OCI-LY7 (cell line): ENCODE measurements at regions of chr4 and their contacts with region 1.

Region 1: DNA sequence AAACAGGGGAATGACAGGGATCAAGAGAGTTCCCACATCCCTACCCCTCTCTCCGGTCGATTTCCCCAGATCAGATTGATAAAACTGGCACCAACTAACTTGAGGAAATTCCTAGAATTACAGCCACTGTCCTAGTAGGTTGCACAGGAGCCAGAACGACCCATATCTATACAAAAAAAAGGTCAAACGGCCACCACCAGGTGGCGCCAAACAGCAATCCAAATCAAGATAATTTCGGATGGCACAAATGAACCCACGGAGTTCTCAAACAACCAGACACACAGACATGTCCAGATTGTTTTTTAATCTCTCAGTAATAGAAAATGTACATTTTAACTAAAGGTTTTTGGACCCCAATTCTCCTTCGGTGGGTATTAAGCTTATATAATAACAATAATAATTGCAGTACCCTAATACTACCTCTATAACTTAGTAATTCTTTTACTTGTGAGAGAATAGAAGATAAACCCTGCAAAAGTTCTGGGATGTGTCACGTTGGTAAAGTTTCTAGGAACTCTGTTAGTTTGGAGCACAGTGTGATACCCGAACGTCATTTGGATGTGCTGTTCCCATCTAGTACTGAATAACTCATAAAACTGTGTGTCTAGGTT is 212.6 kb downstream of the SPOCK3 start:
- DNase-seq: peak; percentile 55
- H3K4me3 ChIP-seq: no peak overlapping the region
- H3K27ac ChIP-seq: no peak overlapping the region
- H3K4me1 ChIP-seq: no peaks in the 10 kb centered on the region
- CTCF ChIP-seq: peak; percentile 92

Region 2: DNA sequence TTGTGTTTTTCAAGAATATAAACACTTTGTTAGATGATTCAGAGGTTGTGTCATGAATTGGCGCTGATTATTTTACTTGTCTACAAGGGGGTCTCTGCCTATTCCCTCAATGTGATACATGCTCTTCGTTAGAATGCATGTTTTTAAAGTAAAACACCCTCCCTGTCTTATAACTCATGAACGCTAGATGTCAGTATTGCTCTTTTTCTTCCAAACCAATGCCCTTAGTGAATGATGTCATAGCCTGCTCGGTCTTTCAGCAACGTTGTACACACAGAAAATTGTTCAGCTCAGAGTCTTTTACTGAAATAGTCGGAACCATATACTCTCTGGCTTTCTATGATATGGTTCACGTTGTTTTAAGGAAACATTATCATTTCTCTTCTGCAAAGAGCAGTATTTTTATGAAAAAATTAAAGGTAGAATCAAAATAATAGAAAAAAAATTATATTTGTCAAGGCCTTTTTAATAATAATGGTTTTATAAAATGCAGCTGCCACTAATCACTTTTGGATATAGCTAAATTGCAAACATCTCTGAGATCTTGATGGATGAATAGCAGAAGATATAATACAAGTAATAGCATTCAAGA is 855.7 kb before region 1 on chr4:
- CTCF ChIA-PET with region 1: no interaction called
- POLR2A ChIA-PET with region 1: no interaction called
- intact Hi-C with region 1: loop called (anchors 10 kb)
- DNase-seq: peak; percentile 68
- H3K4me3 ChIP-seq: no peak overlapping the region
- H3K27ac ChIP-seq: no peak overlapping the region
- H3K4me1 ChIP-seq: no peaks in the 10 kb centered on the region
- CTCF ChIP-seq: peak; percentile 84

Region 3: GRCh38 chr4:167100120-167100519 is 78.5 kb after region 1 on chr4:
- CTCF ChIA-PET with region 1: no interaction called
- POLR2A ChIA-PET with region 1: no interaction called
- intact Hi-C with region 1: no loop called
- DNase-seq: no peak
- H3K4me3 ChIP-seq: no peak overlapping the region
- H3K27ac ChIP-seq: no peak overlapping the region
- H3K4me1 ChIP-seq: no peaks in the 10 kb centered on the region
- CTCF ChIP-seq: no peak

Region 4: GRCh38 chr4:167290678-167291077 is 269.0 kb after region 1 on chr4:
- CTCF ChIA-PET with region 1: no interaction called
- POLR2A ChIA-PET with region 1: no interaction called
- intact Hi-C with region 1: loop called (anchors 5 kb)
- DNase-seq: no peak
- H3K4me3 ChIP-seq: no peak overlapping the region
- H3K27ac ChIP-seq: no peak overlapping the region
- H3K4me1 ChIP-seq: no peaks in the 10 kb centered on the region
- CTCF ChIP-seq: peak; percentile 50

Region 5: GRCh38 chr4:167622481-167623246 is 601.0 kb after region 1 on chr4:
- CTCF ChIA-PET with region 1: no interaction called
- POLR2A ChIA-PET with region 1: no interaction called
- intact Hi-C with region 1: loop called (anchors 10 kb)
- DNase-seq: peak; percentile 47
- H3K4me3 ChIP-seq: no peak overlapping the region
- H3K27ac ChIP-seq: no peak overlapping the region
- H3K4me1 ChIP-seq: no peaks in the 10 kb centered on the region
- CTCF ChIP-seq: peak; percentile 87

Region 6: DNA sequence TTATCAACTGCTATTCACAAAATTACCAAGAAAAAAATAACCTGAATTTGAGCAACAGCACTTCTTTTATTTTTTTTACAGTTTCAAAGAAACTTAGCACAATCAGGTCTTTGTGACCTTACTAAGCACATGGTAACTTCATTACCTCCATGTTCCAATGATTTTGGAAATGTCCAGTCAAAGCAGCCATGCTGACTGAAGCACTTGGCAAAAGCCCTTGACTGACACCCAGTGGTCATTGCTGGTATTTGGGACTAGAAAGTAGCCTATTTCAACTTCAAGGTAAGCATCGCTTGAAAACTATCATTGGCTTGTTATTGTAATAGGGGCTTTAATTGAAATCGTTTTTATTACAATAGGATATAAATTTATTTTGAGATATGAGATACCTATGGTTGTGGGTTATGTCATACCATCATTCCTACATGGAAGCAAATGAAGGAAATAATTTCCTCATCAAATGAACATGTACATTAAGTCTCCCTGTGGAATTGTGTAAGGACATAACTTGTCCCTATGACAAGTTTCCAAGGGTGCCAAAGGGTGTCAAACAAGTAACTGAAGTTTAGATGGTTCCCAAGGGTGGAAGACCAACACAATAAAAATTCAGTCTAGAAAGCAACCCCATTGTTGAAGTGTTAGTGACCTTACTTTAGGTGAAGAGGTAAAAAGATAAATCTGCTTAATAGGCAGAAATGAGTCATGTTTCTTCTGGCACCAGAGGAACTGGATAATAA is 1055.5 kb after region 1 on chr4:
- CTCF ChIA-PET with region 1: no interaction called
- POLR2A ChIA-PET with region 1: no interaction called
- intact Hi-C with region 1: loop called (anchors 2 kb)
- DNase-seq: peak; percentile 52
- H3K4me3 ChIP-seq: no peak overlapping the region
- H3K27ac ChIP-seq: no peak overlapping the region
- H3K4me1 ChIP-seq: no peaks in the 10 kb centered on the region
- CTCF ChIP-seq: peak; percentile 94

Region 7: GRCh38 chr4:168153596-168154440 is 1132.2 kb after region 1 on chr4:
- CTCF ChIA-PET with region 1: no interaction called
- POLR2A ChIA-PET with region 1: no interaction called
- intact Hi-C with region 1: loop called (anchors 5 kb)
- DNase-seq: peak; percentile 73
- H3K4me3 ChIP-seq: no peak overlapping the region
- H3K27ac ChIP-seq: no peak overlapping the region
- H3K4me1 ChIP-seq: no peaks in the 10 kb centered on the region
- CTCF ChIP-seq: peak; percentile 88